ENCODE measurements at regions of chr1 and their contacts with region 1.

Region 1: GRCh38 chr1:45750298-45751038 is at the start of gene IPP:
- DNase-seq: peak; percentile 81 to 96 (median 88)
- ATAC-seq: peak; percentile 94
- H3K4me3 ChIP-seq: peak within 1 kb of the TSS; percentile 81
- H3K4me3 Mint-ChIP-seq: peak within 1 kb of the TSS; percentile 90 to 98 (median 96)
- H3K27ac ChIP-seq: peak within 1 kb of the TSS; percentile 97
- H3K27ac Mint-ChIP-seq: peak within 1 kb of the TSS; percentile 95 to 100 (median 99)
- H3K4me1 ChIP-seq: peaks cover 0 to 12% of the 10 kb centered on the region in 2 donors
- H3K4me1 Mint-ChIP-seq: peaks cover 7 to 50% (median 37%) of the 10 kb centered on the region in 7 donors
- H3K27me3 ChIP-seq: no peaks in the 10 kb centered on the region
- H3K27me3 Mint-ChIP-seq: peaks cover 0 to 2% (median 0%) of the 10 kb centered on the region in 5 donors
- total RNA-seq, gene IPP: 9.1 to 19.8 (median 12.5) TPM

Region 2: GRCh38 chr1:45521398-45522323 is 228.8 kb before region 1 on chr1 and contains the start of gene PRDX1:
- CTCF ChIA-PET with region 1: no interaction called
- POLR2A ChIA-PET with region 1: no interaction called
- intact Hi-C with region 1: loop called in 1 of 2 experiments (anchors 5 kb)
- DNase-seq: peak; percentile 91 to 99 (median 93)
- ATAC-seq: peak; percentile 95
- H3K4me3 ChIP-seq: peak within 1 kb of the TSS; percentile 94
- H3K4me3 Mint-ChIP-seq: peak within 1 kb of the TSS; percentile 90 to 99 (median 94)
- H3K27ac ChIP-seq: peak within 1 kb of the TSS; percentile 87
- H3K27ac Mint-ChIP-seq: peak within 1 kb of the TSS; percentile 83 to 96 (median 91)
- H3K4me1 ChIP-seq: peaks cover 7 to 8% of the 10 kb centered on the region in 2 donors
- H3K4me1 Mint-ChIP-seq: peaks cover 14 to 56% (median 32%) of the 10 kb centered on the region in 7 donors
- H3K27me3 ChIP-seq: no peaks in the 10 kb centered on the region
- H3K27me3 Mint-ChIP-seq: peaks cover 0 to 12% (median 0%) of the 10 kb centered on the region in 5 donors
- total RNA-seq, gene PRDX1: 28.8 to 369 (median 96.3) TPM

Region 3: DNA sequence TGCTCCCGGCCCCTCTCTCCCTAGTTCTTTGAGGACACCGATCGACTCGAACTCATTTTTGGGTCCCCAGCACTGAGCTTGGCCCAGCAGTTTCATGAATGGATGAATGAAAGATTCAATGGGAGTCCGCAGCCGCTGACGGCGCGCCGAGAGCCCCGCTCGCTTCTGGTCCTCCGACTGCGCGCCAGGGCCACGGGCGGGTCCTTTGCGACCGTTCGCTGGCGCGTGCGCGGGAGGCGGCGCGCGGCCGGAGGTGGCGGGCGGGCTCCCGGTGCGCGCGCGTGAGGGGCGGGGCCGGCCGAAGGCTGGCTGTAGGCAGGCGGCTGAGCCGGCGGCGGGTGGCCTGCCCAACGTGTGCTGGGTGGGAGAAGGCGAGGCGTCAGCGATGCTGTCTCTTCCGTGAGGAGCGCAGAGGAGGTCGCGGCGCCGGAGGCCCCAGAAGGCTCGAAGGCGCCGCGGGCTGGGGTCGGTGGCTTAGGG is 52.9 kb after region 1 on chr1 and contains the start of gene MAST2:
- CTCF ChIA-PET with region 1: no interaction called
- POLR2A ChIA-PET with region 1: interaction called, 3 read pairs
- intact Hi-C with region 1: loop called (anchors 1 to 5 kb)
- DNase-seq: peak; percentile 53 to 95 (median 71)
- ATAC-seq: peak; percentile 98
- H3K4me3 ChIP-seq: peak within 1 kb of the TSS; percentile 65
- H3K4me3 Mint-ChIP-seq: peak within 1 kb of the TSS; percentile 87 to 100 (median 92)
- H3K27ac ChIP-seq: peak within 1 kb of the TSS; percentile 41
- H3K27ac Mint-ChIP-seq: peak within 1 kb of the TSS; percentile 10 to 87 (median 77)
- H3K4me1 ChIP-seq: peaks cover 0 to 7% of the 10 kb centered on the region in 2 donors
- H3K4me1 Mint-ChIP-seq: peaks cover 21 to 33% (median 26%) of the 10 kb centered on the region in 7 donors
- H3K27me3 ChIP-seq: no peaks in the 10 kb centered on the region
- H3K27me3 Mint-ChIP-seq: no peaks in the 10 kb centered on the region
- total RNA-seq, gene MAST2: 4.9 to 22.7 (median 7.1) TPM

Region 4: DNA sequence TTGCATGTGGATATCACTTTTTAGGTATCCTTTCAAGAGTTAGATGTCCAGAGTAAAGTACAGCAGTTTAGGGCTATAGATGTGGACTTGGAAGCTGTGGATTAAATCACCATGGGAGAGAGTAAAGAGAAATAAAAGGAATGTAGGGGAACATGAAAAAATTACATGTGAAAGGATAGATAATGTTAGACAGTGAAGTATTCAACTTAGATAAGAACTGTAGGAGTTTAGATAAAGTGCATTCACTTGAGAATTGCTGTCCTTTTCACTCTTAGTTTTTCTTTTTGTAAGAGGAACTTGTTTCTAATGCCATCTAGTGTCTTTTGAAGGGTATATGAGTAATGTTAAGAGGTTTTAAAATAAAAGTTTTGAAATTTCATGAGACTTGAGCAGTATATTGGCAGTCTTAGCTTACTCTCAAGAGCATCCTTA is 93.0 kb after region 1 on chr1:
- CTCF ChIA-PET with region 1: no interaction called
- POLR2A ChIA-PET with region 1: no interaction called
- intact Hi-C with region 1: loop called in 1 of 2 experiments (anchors 1 kb)
- DNase-seq: peak in 1 of 9 donors; percentile 2
- ATAC-seq: no peak
- H3K4me3 ChIP-seq: no peak overlapping the region
- H3K4me3 Mint-ChIP-seq: peak overlapping the region in 1 of 10 donors; percentile 60
- H3K27ac ChIP-seq: no peak overlapping the region
- H3K27ac Mint-ChIP-seq: peak overlapping the region in 1 of 9 donors; percentile 72
- H3K4me1 ChIP-seq: no peaks in the 10 kb centered on the region
- H3K4me1 Mint-ChIP-seq: peaks cover 0 to 14% (median 5%) of the 10 kb centered on the region in 7 donors
- H3K27me3 ChIP-seq: no peaks in the 10 kb centered on the region
- H3K27me3 Mint-ChIP-seq: no peaks in the 10 kb centered on the region

Region 5: DNA sequence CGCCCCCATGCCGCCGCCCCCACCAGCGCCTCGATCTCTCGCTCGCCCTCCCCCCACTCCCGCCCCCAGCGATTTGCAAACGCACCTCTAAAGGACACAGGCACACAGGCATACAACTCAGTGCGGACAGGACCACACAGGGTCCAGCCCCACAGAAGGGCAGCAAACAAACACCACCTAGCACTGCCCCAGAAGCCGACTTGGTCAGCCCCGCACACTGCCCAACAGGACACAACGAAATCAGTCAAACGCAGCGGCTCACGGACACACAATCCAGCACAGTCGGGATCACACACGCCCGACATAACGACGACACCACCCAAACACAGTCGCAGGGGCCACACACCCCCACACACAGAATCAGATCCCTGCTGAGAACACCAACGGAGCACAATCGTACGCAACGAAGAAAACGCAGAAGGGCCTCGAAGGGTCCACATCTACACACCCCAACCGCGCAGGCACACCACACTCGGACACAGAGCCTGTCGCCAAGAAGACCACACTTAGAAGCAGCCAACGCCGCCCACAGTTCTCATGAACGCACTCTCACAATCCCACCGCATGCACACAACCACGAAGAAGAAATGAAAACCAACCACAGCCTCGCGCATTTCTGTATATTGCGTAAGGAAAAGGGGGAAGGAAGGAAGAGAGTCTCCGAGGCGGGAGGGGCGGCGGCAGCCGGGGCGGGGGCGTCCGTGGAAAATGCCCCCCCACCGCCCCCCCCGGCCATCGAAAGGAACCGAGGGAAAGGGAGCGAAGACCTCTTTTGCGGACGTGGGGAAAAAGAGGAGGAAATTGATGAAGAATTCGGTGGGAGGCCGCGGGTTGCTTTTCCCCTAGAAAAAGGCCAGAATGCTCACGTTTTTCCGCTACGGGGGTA is 1481.1 kb after region 1 on chr1:
- CTCF ChIA-PET with region 1: no interaction called
- POLR2A ChIA-PET with region 1: no interaction called
- intact Hi-C with region 1: no loop called
- DNase-seq: peak in 4 of 9 donors; percentile 14 to 33 (median 18)
- ATAC-seq: peak; percentile 55
- H3K4me3 ChIP-seq: peak overlapping the region; percentile 4
- H3K4me3 Mint-ChIP-seq: peak overlapping the region; percentile 74 to 94 (median 84)
- H3K27ac ChIP-seq: no peak overlapping the region
- H3K27ac Mint-ChIP-seq: peak overlapping the region in 1 of 9 donors; percentile 62
- H3K4me1 ChIP-seq: peaks cover 12 to 13% of the 10 kb centered on the region in 2 donors
- H3K4me1 Mint-ChIP-seq: peaks cover 8 to 37% (median 28%) of the 10 kb centered on the region in 7 donors
- H3K27me3 ChIP-seq: peaks cover 23 to 45% of the 10 kb centered on the region in 2 donors
- H3K27me3 Mint-ChIP-seq: peaks cover 70 to 95% (median 90%) of the 10 kb centered on the region in 5 donors

Measured in naive thymus-derived CD4-positive, alpha-beta T cell (primary cell).